A549 (cell line): ENCODE measurements at regions of chr2 and their contacts with region 1.

Region 1: GRCh38 chr2:177380181-177380580 is 12.4 kb upstream of the AGPS start:
- DNase-seq: no peak
- ATAC-seq: no peak
- H3K4me3 ChIP-seq: no peak overlapping the region
- H3K27ac ChIP-seq: no peak overlapping the region
- H3K4me1 ChIP-seq: no peaks in the 10 kb centered on the region
- CTCF ChIP-seq: no peak
- EP300 ChIP-seq: no peak
- POLR2A ChIP-seq: no peak
- RAD21 ChIP-seq: no peak

Region 2: DNA sequence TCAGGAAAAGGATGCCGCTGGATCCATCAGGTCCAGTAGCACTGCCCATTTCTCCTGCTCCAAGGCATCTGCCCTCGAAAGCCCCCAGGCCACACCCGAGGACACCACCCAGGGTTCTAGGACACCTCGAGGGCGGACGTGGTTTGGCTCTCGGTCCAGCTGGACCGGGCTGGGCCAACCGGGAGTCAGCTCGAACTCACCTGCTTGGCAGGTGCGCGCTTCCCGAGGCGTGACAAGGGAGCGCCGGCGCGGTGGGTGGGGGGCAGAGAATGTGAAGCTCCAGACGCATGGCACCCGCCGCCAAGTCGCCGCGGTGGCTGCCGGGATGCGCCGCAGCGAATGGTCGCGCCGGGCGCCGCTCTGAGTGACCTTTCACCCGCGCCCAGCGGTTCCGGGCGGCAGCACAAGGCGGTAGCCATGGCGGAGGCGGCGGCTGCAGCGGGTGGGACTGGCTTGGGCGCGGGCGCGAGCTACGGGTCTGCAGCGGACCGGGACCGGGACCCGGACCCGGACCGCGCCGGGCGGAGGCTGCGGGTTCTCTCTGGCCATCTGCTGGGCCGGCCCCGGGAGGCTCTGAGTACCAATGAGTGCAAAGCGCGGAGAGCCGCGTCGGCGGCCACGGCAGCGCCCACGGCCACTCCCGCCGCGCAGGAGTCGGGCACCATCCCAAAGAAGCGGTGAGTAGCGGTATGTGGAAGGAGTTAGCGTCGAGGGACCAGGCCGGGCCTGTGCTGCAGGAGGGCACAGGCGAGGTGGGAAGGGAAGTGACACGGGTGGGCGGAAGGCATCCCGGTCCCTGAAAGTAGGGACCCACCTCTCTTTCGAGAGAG is 12.4 kb after region 1 on chr2 and contains the start of gene AGPS:
- CTCF ChIA-PET with region 1: interaction called, 11 read pairs
- POLR2A ChIA-PET with region 1: interaction called, 9 read pairs
- DNase-seq: peak; percentile 59 to 80
- ATAC-seq: peak; percentile 91 to 94
- H3K4me3 ChIP-seq: peak within 1 kb of the TSS; percentile 79
- H3K27ac ChIP-seq: peak within 1 kb of the TSS; percentile 94 to 96
- H3K4me1 ChIP-seq: peaks cover 54% of the 10 kb centered on the region
- CTCF ChIP-seq: no peak
- EP300 ChIP-seq: no peak
- POLR2A ChIP-seq: peak; percentile 70
- RAD21 ChIP-seq: no peak
- polyA plus RNA-seq, gene AGPS: 45.0 and 62.1 TPM in 2 replicates